ENCODE measurements at regions of chr5 and their contacts with region 1.

Region 1: DNA sequence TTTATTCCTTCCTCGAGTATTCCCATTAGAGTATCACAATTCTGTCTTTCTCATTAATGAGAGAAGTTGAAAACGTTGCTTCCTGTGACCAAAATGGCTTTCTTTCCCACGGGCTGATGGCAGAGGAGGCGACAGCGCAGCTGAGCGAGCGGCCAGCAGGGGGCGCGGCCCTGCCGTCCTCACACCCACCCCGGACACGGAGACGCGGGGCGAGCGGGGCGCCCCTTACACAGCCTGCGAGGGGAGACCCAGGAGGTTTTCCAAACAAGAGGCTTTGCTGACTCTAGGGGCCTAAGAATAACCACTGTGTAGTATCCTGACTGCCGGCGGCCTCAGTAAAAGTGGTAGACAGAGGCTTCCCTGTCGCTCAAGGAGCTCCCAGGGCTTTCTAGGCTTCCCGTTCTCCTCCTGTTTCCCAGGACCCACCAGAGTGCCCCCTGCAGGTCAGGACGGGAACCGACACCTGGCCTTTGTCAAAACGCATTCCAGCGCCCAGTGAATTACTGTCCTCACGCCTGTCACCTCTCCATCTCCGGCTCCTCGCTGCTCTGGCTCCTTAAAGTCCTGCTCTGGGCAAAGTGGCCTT is 27.3 kb upstream of the FGF1 start:
- DNase-seq: peak; percentile 85
- H3K4me3 ChIP-seq: peak overlapping the region; percentile 61 to 90
- H3K27ac ChIP-seq: peak overlapping the region; percentile 76 to 80
- H3K4me1 ChIP-seq: peaks cover 5 to 26% of the 10 kb centered on the region in 2 experiments; a peak in 3 of 4 replicates
- H3K27me3 ChIP-seq: no peaks in the 10 kb centered on the region
- CTCF ChIP-seq: peak; percentile 98
- EP300 ChIP-seq: no peak
- RAD21 ChIP-seq: peak; percentile 58

Region 2: GRCh38 chr5:141951332-141951781 is 761.9 kb before region 1 on chr5:
- CTCF ChIA-PET with region 1: no interaction called
- POLR2A ChIA-PET with region 1: no interaction called
- DNase-seq: peak; percentile 63
- H3K4me3 ChIP-seq: no peak overlapping the region
- H3K27ac ChIP-seq: no peak overlapping the region
- H3K4me1 ChIP-seq: no peaks in the 10 kb centered on the region
- H3K27me3 ChIP-seq: no peaks in the 10 kb centered on the region
- CTCF ChIP-seq: peak; percentile 43
- EP300 ChIP-seq: no peak
- RAD21 ChIP-seq: no peak

Region 3: GRCh38 chr5:142548739-142549275 is 164.4 kb before region 1 on chr5:
- CTCF ChIA-PET with region 1: no interaction called
- POLR2A ChIA-PET with region 1: no interaction called
- DNase-seq: peak; percentile 87
- H3K4me3 ChIP-seq: peak overlapping the region in 1 of 2 experiments; percentile 34; a peak in 1 of 4 replicates
- H3K27ac ChIP-seq: peak overlapping the region; percentile 59 to 60; a peak in 3 of 4 replicates
- H3K4me1 ChIP-seq: peaks cover 21 to 37% of the 10 kb centered on the region in 2 experiments
- H3K27me3 ChIP-seq: no peaks in the 10 kb centered on the region
- CTCF ChIP-seq: peak; percentile 98
- EP300 ChIP-seq: no peak
- RAD21 ChIP-seq: peak; percentile 95

Region 4: DNA sequence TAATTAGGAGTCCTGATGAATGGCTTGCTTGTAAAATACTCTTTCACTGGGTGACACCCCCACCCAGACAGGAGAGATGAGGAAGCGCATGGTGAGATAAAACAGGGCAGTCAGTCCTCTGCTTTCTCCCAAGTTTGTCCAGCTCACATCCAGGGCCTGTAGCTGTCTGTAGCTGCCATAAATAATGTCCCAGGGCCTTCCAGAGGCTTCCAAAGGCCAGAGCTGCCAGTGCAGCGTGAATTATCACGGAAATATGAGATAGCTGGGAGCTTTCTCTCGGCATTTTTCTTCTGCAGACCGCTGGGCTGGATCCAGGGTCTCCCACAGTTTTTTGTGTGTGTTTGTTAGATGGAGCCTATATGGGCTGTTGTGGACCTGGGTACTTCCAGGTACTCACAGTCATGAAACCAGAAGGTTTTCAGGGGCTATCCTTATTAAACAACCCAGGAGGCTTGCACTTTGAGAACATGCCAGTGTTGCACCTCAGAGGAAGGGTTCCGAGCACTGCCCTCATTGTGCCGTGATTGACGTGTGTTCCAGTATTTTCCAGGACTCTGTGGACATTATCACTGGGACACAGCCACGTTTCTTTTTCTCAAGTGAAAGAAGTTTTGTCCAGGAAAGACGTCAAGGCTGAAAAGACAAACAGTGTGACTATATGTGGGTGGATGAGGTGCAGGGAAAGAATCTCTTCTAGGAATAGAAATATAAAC is 144.8 kb before region 1 on chr5:
- CTCF ChIA-PET with region 1: no interaction called
- POLR2A ChIA-PET with region 1: no interaction called
- DNase-seq: no peak
- H3K4me3 ChIP-seq: no peak overlapping the region
- H3K27ac ChIP-seq: no peak overlapping the region; a peak in 1 of 4 replicates
- H3K4me1 ChIP-seq: peaks cover 3 to 5% of the 10 kb centered on the region in 2 experiments; a peak in 2 of 4 replicates
- H3K27me3 ChIP-seq: no peaks in the 10 kb centered on the region
- CTCF ChIP-seq: no peak
- EP300 ChIP-seq: no peak
- RAD21 ChIP-seq: no peak

Region 5: GRCh38 chr5:142618130-142618523 is 95.1 kb before region 1 on chr5:
- CTCF ChIA-PET with region 1: interaction called, 30 read pairs
- POLR2A ChIA-PET with region 1: no interaction called
- DNase-seq: no peak
- H3K4me3 ChIP-seq: no peak overlapping the region
- H3K27ac ChIP-seq: peak overlapping the region in 1 of 2 experiments; percentile 52; a peak in 2 of 4 replicates
- H3K4me1 ChIP-seq: peaks cover 2 to 31% of the 10 kb centered on the region in 2 experiments; a peak in 3 of 4 replicates
- H3K27me3 ChIP-seq: no peaks in the 10 kb centered on the region
- CTCF ChIP-seq: no peak
- EP300 ChIP-seq: no peak; a peak in 1 of 4 replicates
- RAD21 ChIP-seq: no peak

Region 6: DNA sequence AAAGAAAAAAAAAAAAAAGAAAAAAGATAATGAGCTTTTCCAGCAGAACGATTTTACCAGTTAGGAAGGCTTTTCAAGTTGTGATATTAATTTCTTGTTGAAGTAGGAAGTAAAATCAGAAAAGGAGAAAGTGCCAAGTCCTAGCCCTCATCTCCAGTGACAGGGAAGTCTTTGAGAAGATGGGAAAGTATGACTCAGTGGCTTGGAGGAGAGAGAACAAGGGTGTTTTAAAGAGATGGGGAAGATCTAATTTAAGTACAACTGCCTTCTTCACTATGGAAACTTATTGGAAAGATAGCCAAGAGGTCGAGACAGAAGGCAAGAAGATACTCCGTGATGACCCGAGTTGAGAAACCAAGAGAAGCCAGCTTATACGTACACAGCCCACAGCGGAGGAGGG is 50.0 kb before region 1 on chr5:
- CTCF ChIA-PET with region 1: interaction called, 668 read pairs
- POLR2A ChIA-PET with region 1: no interaction called
- DNase-seq: no peak
- H3K4me3 ChIP-seq: no peak overlapping the region
- H3K27ac ChIP-seq: no peak overlapping the region
- H3K4me1 ChIP-seq: peaks cover 3 to 7% of the 10 kb centered on the region in 2 experiments; a peak in 1 of 4 replicates
- H3K27me3 ChIP-seq: no peaks in the 10 kb centered on the region
- CTCF ChIP-seq: no peak
- EP300 ChIP-seq: no peak
- RAD21 ChIP-seq: no peak

Region 7: DNA sequence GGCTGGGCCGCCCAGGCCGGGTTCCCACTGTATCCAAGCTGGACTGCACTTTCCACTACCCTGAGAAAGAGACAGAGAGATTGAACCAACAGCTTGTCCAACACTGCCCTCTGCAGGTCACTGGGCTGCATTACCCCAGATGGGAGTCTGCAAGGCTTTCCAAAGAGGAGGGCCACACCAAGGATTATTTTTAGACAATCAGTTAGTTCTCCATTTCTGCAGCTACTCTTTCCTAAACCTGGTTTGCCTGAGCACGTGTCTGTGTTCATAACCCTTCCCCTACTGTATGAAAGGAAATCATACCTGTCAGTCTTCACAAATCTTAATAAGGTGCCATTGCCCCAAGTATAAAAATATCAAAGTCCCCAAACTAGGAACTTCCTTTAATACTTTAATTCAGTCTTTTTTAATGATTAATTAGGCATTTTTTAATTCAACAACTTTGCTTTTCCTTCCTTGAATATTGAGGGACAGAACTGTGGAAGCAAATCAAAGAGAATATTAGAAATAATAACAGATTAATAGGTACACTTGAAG is 14.0 kb before region 1 on chr5:
- CTCF ChIA-PET with region 1: interaction called, 248 read pairs
- POLR2A ChIA-PET with region 1: no interaction called
- DNase-seq: peak; percentile 74
- H3K4me3 ChIP-seq: no peak overlapping the region; a peak in 1 of 4 replicates
- H3K27ac ChIP-seq: no peak overlapping the region
- H3K4me1 ChIP-seq: peaks cover 23 to 28% of the 10 kb centered on the region in 2 experiments
- H3K27me3 ChIP-seq: no peaks in the 10 kb centered on the region
- CTCF ChIP-seq: peak; percentile 95
- EP300 ChIP-seq: no peak
- RAD21 ChIP-seq: peak; percentile 100

Region 8: GRCh38 chr5:142783601-142784341 is 70.6 kb after region 1 on chr5:
- CTCF ChIA-PET with region 1: interaction called, 15 read pairs
- POLR2A ChIA-PET with region 1: no interaction called
- DNase-seq: peak; percentile 76
- H3K4me3 ChIP-seq: no peak overlapping the region
- H3K27ac ChIP-seq: peak overlapping the region; percentile 17 to 93; a peak in 3 of 4 replicates
- H3K4me1 ChIP-seq: peaks cover 35 to 54% of the 10 kb centered on the region in 2 experiments
- H3K27me3 ChIP-seq: no peaks in the 10 kb centered on the region
- CTCF ChIP-seq: peak; percentile 8; the same call in 1 of the 2 replicates
- EP300 ChIP-seq: peak in 1 of 2 experiments; percentile 60; a peak in 1 of 4 replicates
- RAD21 ChIP-seq: peak; percentile 13; the same call in 1 of the 2 replicates

Region 9: GRCh38 chr5:142888469-142889085 is 175.4 kb after region 1 on chr5:
- CTCF ChIA-PET with region 1: interaction called, 1,285 read pairs
- POLR2A ChIA-PET with region 1: interaction called, 4 read pairs
- DNase-seq: peak; percentile 70
- H3K4me3 ChIP-seq: no peak overlapping the region; a peak in 1 of 4 replicates
- H3K27ac ChIP-seq: no peak overlapping the region
- H3K4me1 ChIP-seq: no peaks in the 10 kb centered on the region; a peak in 2 of 4 replicates
- H3K27me3 ChIP-seq: no peaks in the 10 kb centered on the region
- CTCF ChIP-seq: peak; percentile 78
- EP300 ChIP-seq: no peak
- RAD21 ChIP-seq: peak; percentile 88

Region 10: DNA sequence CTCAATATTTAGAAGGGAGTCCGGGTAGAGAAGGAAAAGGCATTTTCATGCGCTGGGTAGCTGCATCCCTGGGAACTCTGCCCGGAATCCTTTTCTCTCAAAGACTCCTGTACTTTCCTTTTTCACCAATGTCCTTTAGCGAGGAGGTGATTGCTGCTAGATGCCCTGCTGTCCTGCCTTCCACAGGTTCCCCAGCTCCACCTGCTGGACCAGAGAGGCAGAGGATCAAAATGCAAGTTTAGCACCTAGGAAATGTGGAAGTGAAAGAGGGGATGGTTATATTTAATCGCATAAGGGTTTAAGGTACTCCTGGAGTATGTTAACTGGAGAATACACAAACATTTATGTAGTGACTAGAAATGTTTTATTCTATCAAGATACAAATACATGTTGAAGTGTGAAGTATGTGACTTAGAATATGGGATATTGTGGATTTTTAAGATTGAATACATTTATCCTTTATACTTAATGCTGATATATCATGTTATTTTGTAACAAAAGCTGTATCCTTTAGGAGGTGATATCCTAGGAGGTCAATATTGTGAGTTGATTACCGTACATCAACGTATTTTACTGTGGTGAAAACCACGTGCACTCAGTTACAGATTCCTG is 202.7 kb after region 1 on chr5:
- CTCF ChIA-PET with region 1: interaction called, 36 read pairs
- POLR2A ChIA-PET with region 1: no interaction called
- DNase-seq: peak; percentile 37
- H3K4me3 ChIP-seq: peak overlapping the region in 1 of 2 experiments; percentile 31; a peak in 1 of 4 replicates
- H3K27ac ChIP-seq: no peak overlapping the region
- H3K4me1 ChIP-seq: no peaks in the 10 kb centered on the region
- H3K27me3 ChIP-seq: no peaks in the 10 kb centered on the region
- CTCF ChIP-seq: peak; percentile 58
- EP300 ChIP-seq: no peak
- RAD21 ChIP-seq: peak; percentile 61

Measured in SK-N-SH (cell line).